HEK293 (cell line): ENCODE measurements at regions of chr19 and their contacts with region 1.

Region 1: GRCh38 chr19:49391581-49392399 is 3.7 kb downstream of the KASH5 start:
- H3K4me3 ChIP-seq: no peak overlapping the region
- H3K27ac ChIP-seq: no peak overlapping the region
- H3K4me1 ChIP-seq: no peaks in the 10 kb centered on the region
- CTCF ChIP-seq: peak; percentile 94

Region 2: GRCh38 chr19:49282184-49282583 is 109.6 kb before region 1 on chr19:
- CTCF ChIA-PET with region 1: no interaction called
- POLR2A ChIA-PET with region 1: no interaction called
- H3K4me3 ChIP-seq: no peak overlapping the region
- H3K27ac ChIP-seq: no peak overlapping the region
- H3K4me1 ChIP-seq: no peaks in the 10 kb centered on the region
- CTCF ChIP-seq: no peak

Region 3: GRCh38 chr19:49340069-49340864 is 51.5 kb before region 1 on chr19:
- CTCF ChIA-PET with region 1: no interaction called
- POLR2A ChIA-PET with region 1: no interaction called
- H3K4me3 ChIP-seq: no peak overlapping the region
- H3K27ac ChIP-seq: peak overlapping the region; percentile 29; the same call in 1 of the 2 replicates
- H3K4me1 ChIP-seq: peaks cover 7% of the 10 kb centered on the region; the same call in 1 of the 2 replicates
- CTCF ChIP-seq: no peak

Region 4: GRCh38 chr19:49374665-49375434 is 16.9 kb before region 1 on chr19:
- CTCF ChIA-PET with region 1: interaction called, 31 read pairs
- POLR2A ChIA-PET with region 1: no interaction called
- H3K4me3 ChIP-seq: no peak overlapping the region
- H3K27ac ChIP-seq: no peak overlapping the region
- H3K4me1 ChIP-seq: no peaks in the 10 kb centered on the region
- CTCF ChIP-seq: no peak

Region 5: DNA sequence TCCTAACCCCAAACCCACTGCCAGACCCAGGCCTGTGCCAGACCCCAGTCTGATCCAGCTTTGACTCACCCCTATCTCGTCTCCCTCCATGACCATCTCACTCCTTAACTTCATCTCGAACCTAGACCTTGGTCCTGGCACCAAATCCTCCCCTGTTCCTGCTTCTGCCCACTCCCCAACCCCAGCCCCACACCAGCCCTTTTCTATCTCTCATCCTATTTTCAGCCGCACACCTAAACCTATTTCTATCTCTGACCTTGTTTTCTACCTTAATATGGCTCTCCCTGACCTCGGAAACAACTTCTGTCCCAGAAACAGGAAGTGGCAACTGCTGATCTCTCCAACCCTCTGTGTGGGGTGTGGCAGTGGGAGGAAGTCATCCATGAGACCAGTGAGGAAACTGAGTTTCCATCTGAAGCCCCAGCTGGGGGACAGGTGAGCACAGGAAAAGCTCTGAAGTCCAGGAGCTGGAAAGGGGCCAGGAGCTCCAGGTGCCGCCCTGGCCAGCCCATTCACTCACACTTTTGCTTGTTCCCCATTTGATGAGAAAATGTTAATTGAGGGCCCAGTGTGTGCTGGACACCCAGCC is 17.7 kb after region 1 on chr19:
- CTCF ChIA-PET with region 1: interaction called, 16 read pairs
- POLR2A ChIA-PET with region 1: interaction called, 5 read pairs
- H3K4me3 ChIP-seq: no peak overlapping the region
- H3K27ac ChIP-seq: no peak overlapping the region
- H3K4me1 ChIP-seq: peaks cover 2% of the 10 kb centered on the region; the same call in 1 of the 2 replicates
- CTCF ChIP-seq: no peak

Region 6: DNA sequence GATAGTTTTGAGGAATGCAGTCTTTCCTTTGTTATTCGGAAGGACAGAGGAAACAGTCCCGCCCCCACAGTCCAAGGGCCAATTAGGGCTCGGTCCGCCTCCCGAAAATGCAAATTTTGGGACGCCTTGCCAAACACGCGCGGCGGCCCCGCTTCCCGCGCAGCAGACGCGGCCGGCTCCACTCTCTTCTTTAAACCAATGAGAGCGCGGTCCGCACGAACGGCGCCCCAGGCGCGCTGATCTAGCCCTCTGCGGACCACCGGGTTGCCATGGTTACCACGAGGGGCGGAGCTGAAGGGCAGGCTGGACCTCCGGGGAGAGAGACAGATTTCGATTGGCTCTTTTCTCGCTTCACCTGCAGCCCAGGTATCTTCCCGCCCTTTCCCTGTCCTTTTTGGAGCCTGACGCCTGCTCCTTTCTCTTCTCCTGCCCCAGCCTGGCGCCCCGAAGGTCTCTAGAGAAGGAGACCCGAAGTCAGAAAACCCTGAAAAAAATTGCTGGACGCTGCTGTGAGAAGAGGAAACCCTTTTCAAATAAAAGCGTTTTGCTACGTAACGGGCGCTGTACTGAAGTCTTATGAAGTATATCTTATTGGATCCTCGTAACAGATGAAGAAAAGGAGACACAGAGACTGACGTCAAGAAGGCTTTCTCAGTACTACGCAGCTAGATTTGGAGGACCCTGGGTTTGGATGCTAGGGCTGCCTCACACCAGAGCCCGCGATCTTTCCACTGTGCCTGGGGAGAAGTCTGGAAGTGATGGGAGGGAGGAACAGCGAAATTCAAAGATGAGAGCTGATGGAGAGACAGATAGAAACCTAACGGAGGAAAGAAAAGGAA is 29.5 kb after region 1 on chr19:
- CTCF ChIA-PET with region 1: interaction called, 33 read pairs
- POLR2A ChIA-PET with region 1: no interaction called
- H3K4me3 ChIP-seq: peak overlapping the region; percentile 16; the same call in 1 of the 2 replicates
- H3K27ac ChIP-seq: no peak overlapping the region
- H3K4me1 ChIP-seq: peaks cover 5% of the 10 kb centered on the region
- CTCF ChIP-seq: no peak

Region 7: DNA sequence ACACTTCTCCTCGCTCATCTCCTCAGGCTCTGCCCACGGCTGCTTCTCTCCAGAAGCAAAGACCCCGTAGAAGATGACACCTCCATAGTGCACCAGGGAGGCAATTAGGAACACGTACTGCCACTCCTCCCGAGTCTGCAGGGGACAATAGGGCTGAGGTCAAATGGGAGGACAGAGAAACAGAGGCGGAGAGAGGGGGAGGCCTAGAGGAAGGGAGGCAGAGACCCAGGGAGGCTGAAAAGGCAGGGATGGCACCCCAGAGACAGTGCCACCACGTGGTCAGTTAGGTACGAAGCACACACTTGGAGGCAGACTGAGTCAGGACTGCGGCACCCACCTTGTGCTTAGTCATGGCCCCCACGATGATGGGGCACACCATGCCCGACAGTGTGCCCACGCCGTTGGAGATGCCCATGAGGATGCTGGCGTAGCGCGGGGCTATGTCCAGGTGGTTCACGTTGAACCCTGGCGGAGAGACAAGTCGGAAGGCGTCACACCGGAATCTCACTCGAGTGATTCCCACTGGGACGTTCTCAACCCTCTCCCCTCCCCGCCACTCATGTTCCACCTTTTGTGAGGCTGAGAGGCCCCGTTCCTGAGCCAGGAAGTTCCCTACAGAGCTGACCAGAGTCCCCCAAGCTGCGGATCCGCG is 39.0 kb after region 1 on chr19:
- CTCF ChIA-PET with region 1: interaction called, 33 read pairs
- POLR2A ChIA-PET with region 1: no interaction called
- H3K4me3 ChIP-seq: no peak overlapping the region
- H3K27ac ChIP-seq: no peak overlapping the region
- H3K4me1 ChIP-seq: no peaks in the 10 kb centered on the region
- CTCF ChIP-seq: peak; percentile 76

Region 8: GRCh38 chr19:49443366-49444099 is 51.7 kb after region 1 on chr19:
- CTCF ChIA-PET with region 1: interaction called, 59 read pairs
- POLR2A ChIA-PET with region 1: interaction called, 5 read pairs
- H3K4me3 ChIP-seq: peak overlapping the region; percentile 60
- H3K27ac ChIP-seq: peak overlapping the region; percentile 50
- H3K4me1 ChIP-seq: peaks cover 7% of the 10 kb centered on the region
- CTCF ChIP-seq: peak; percentile 99

Region 9: GRCh38 chr19:49451430-49452181 is 59.8 kb after region 1 on chr19 and contains the start of gene PIH1D1:
- CTCF ChIA-PET with region 1: interaction called, 28 read pairs
- POLR2A ChIA-PET with region 1: interaction called, 5 read pairs
- H3K4me3 ChIP-seq: peak within 1 kb of the TSS; percentile 69
- H3K27ac ChIP-seq: peak within 1 kb of the TSS; percentile 90
- H3K4me1 ChIP-seq: 0 out of 2 replicates have a peak, but pooled peaks cover 6% of the 10 kb centered on the region
- CTCF ChIP-seq: peak; percentile 46

Region 10: DNA sequence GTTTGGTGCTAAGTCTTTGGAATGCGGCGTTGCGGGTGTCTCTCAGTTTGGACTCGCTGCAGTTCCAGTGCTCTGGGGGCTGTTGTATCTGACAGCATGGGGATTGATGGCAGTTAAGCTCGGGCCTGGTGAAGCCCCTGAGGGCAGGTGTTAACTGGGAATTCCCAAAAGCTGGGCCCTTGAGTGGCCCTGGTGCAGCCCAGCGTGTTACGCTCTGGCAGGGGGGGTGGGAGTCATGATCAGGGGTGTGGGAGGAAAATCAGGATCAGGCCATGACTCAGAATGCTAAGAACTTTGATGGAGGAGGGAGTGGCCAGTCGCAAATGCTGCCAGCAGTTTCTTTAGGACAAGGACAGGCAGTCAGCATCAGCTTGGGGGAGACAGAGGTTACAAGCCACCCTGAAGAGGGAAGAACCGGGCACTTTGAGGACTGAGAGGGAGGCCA is 394.6 kb after region 1 on chr19:
- CTCF ChIA-PET with region 1: no interaction called
- POLR2A ChIA-PET with region 1: no interaction called
- H3K4me3 ChIP-seq: no peak overlapping the region
- H3K27ac ChIP-seq: 0 out of 2 replicates have a peak overlapping the region, but pooled peaks have one; percentile 16
- H3K4me1 ChIP-seq: no peaks in the 10 kb centered on the region
- CTCF ChIP-seq: no peak